ENCODE measurements at regions of chr14 and their contacts with region 1.

Region 1: GRCh38 chr14:70655110-70655826 is 13.6 kb downstream of the TTC9 start:
- DNase-seq: peak; percentile 87
- H3K4me3 Mint-ChIP-seq: peak overlapping the region; percentile 84
- H3K27ac Mint-ChIP-seq: peak overlapping the region; percentile 99
- H3K4me1 Mint-ChIP-seq: peaks cover 86% of the 10 kb centered on the region
- H3K27me3 Mint-ChIP-seq: no peaks in the 10 kb centered on the region

Region 2: GRCh38 chr14:70631951-70632350 is 23.3 kb before region 1 on chr14:
- CTCF ChIA-PET with region 1: no interaction called
- POLR2A ChIA-PET with region 1: no interaction called
- intact Hi-C with region 1: no loop called
- DNase-seq: no peak
- H3K4me3 Mint-ChIP-seq: no peak overlapping the region
- H3K27ac Mint-ChIP-seq: no peak overlapping the region
- H3K4me1 Mint-ChIP-seq: peaks cover 9% of the 10 kb centered on the region
- H3K27me3 Mint-ChIP-seq: no peaks in the 10 kb centered on the region

Region 3: DNA sequence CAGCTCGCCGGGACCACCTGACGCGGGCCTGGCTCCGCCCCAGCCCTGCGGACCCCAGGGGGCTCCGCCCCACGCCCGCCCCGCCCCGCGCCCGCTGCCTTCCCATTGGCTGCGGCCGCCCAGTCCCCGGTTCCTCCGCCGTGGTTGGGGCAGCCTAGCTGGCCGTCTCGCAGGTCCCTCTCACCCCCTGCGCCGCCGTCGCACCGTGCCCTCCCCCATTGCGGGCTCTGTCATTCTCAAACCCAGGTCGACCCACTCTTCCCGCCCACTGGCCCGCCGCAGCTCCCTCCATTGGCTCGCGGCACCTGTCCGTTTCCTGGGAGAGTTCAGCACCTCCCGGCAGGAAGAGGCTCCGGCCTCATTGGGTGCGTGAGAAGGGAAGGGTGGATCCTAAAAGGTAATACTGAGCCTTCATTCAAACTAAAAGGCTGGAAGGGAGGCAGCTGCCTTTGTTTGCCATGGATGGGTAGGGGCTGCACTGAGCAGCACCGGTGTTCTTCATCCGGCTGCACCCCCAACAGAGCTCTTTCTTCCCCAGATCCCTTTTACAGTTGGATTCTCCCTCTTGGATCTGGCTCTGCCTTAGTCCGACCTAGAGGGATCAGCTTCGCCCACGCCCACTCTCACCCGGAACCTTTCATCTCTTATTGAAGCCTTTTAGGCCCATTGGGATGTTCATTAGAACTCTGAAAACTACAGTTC is 154.4 kb after region 1 on chr14:
- CTCF ChIA-PET with region 1: no interaction called
- POLR2A ChIA-PET with region 1: no interaction called
- intact Hi-C with region 1: loop called (anchors 5 kb)
- DNase-seq: peak; percentile 96
- H3K4me3 Mint-ChIP-seq: no peak overlapping the region
- H3K27ac Mint-ChIP-seq: no peak overlapping the region
- H3K4me1 Mint-ChIP-seq: peaks cover 6% of the 10 kb centered on the region
- H3K27me3 Mint-ChIP-seq: no peaks in the 10 kb centered on the region

Region 4: DNA sequence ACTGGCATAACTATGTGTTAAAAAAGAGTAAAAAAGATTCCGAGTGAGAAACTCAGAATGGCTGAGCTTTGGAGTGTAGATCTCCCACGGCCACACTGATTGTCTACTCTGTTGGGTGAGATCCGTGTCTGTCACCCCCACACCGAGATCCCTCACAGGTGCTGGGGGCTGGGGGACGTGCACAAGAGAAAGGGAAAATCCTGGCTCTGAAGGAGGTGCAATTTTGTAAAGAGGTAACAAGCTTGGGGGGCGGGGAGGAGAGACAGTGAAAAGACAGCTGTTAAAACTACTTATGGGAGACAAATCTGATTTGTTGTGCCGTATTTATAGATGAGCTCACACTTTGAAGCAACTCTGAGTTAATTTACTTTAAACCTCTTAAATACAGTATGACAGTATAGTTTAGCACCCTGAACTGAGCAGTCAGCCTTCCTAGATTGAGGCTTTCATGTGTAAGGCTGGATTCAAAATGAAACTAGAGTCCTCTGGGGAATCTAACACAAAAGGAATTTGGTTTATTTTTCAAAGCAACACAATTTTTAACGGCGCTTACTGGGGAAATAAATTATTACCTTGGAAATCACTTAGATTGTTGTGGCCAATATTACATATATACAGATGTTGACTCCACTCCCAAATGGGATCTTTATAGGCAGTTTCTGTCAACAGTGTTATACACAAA is 1109.6 kb after region 1 on chr14:
- CTCF ChIA-PET with region 1: no interaction called
- POLR2A ChIA-PET with region 1: no interaction called
- intact Hi-C with region 1: no loop called
- DNase-seq: no peak
- H3K4me3 Mint-ChIP-seq: no peak overlapping the region
- H3K27ac Mint-ChIP-seq: no peak overlapping the region
- H3K4me1 Mint-ChIP-seq: no peaks in the 10 kb centered on the region
- H3K27me3 Mint-ChIP-seq: peaks cover 10% of the 10 kb centered on the region